ENCODE measurements at regions of chr3 and their contacts with region 1.

Region 1: DNA sequence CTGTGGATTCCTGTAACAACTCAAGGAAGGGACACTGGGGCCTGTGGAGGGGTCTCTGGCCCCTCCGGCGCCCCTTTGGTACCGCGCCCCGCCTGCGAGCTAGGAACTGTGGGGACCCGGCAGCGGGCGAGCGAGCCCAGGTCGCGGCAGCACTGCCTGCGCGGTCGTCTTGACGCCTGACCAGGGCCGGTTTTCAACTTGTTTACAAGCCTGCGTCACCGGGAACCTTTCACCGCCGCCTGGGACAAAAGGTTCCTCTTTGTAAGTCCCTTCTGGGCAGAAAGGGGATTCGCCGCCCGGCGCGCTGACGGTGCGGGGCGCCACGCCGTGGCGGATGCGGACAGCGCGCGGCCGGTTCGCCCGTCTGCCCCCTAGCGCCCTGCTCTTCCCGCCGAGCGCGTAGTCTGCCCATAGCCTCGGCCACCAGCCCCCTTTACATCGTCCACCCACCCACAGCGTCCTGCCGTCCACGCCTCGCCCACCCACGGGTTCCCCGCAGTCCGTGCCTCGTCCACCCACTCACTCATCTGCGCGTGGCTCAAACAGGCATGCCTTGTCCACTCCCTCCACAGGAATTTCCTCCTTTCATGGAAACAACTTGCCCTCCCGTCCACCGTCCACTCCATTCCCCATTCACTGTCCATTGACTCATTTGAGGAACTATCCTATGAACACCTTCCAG is 5.5 kb upstream of the CFAP100 start:
- DNase-seq: peak; percentile 91 to 93
- H3K4me3 ChIP-seq: peak overlapping the region in 1 of 3 donors; percentile 8
- H3K27ac ChIP-seq: peak overlapping the region in 1 of 3 donors; percentile 7
- H3K4me1 ChIP-seq: peaks cover 0 to 7% of the 10 kb centered on the region in 2 donors
- H3K27me3 ChIP-seq: no peaks in the 10 kb centered on the region
- CTCF ChIP-seq: peak; percentile 84 to 99 (median 96)
- POLR2A ChIP-seq: peak; percentile 5 to 56

Region 2: DNA sequence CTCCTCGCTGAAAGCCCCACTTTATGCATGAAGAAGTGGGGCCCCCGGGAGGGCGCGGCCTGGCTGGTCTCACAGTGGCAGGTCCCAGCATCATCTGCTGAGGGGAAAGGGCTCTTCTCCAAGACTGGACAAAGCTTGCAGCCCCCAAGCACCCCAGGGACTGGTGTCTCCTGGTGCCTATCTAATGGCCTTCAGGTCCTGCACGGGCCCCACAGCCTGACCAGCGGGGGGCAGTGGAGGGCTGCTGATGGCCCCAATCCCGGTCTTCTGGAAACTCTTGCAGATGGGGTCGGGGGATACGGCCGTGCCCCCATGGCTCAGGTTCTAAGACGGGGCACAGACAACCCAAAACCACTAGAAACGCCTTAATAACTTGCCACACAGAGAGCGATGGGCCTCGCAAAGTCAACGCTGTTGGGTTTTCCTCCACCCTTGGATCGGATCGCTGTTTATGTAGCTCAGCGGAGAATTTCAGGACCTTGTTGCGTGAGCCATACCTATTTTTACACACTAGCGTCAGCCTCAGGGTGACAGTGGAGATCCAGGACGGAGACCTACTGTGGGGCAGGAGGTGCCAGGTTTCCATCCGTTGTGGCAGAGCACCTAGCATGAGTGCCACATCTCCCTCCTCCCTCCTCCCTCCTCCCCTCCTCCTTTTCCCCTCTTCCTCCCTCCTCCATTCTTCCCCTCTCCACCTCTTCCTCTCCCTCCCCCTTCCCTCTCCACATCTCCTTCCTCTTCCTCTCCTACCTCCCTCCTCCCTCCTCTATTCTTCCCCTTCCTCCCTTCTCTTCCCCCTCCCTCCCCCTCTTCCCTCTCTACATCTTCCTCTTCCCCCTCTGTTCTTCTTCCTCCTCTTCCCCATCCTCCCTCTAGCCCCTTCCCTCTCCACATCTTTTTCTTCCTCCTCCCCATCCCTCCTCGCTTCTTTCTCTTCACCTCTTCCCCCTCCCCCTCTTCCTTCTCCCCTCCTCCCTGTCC is 129.6 kb before region 1 on chr3:
- intact Hi-C with region 1: loop called (anchors 2 kb)
- DNase-seq: peak; percentile 64 to 69
- H3K4me3 ChIP-seq: no peak overlapping the region
- H3K27ac ChIP-seq: no peak overlapping the region
- H3K4me1 ChIP-seq: no peaks in the 10 kb centered on the region
- H3K27me3 ChIP-seq: no peaks in the 10 kb centered on the region
- CTCF ChIP-seq: peak; percentile 45 to 86 (median 82)
- POLR2A ChIP-seq: no peak

Region 3: GRCh38 chr3:126456766-126457388 is 67.6 kb after region 1 on chr3:
- intact Hi-C with region 1: no loop called
- DNase-seq: no peak
- H3K4me3 ChIP-seq: no peak overlapping the region
- H3K27ac ChIP-seq: no peak overlapping the region
- H3K4me1 ChIP-seq: no peaks in the 10 kb centered on the region
- H3K27me3 ChIP-seq: no peaks in the 10 kb centered on the region
- CTCF ChIP-seq: no peak
- POLR2A ChIP-seq: no peak